RWPE1 (cell line): ENCODE measurements at regions of chr9 and their contacts with region 1.

Region 1: DNA sequence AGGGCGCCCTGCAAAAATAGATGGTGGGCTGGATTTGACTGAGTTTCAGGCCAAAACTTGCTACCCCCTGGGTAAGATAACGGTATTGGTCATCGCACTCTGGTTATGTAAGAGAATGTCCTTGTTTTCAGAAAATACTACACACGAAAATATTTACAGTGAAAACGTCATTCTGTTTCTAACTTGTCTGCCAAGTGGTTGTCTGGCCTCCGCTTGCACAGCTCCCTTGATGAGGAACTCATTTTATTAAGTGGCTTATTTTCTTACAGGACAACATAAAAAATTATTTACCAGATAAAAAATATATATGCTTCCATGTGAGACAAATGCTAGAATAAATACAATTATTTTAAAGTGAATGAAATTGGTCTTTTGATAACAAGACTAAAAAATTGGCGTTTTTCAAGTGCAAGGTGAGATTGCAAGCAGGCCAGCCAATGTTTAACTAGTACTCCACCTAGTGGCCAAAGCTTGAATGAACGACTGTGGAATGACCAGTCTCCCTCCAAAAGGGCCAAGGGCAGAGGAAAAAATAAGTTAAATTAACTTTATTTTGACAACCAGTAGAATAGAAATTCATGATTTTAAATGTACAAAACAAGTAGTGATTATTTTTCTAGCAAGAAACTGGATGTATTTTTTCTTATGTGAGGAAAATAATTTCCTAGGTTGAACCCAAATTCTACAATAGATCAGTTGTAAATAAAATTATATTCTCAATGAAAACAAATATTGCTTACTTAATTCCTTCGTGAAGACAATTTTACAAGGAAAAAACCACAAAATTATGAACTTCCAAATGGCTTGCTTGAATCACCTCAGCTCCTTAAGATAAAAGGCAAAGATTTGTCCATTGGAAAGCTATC is 93.2 kb downstream of the ZFAND5 start:
- DNase-seq: peak; percentile 80
- H3K27ac ChIP-seq: no peak overlapping the region
- CTCF ChIP-seq: peak; percentile 85

Region 2: GRCh38 chr9:71819115-71819739 is 452.6 kb before region 1 on chr9:
- CTCF ChIA-PET with region 1: no interaction called
- POLR2A ChIA-PET with region 1: no interaction called
- DNase-seq: peak; percentile 42
- H3K27ac ChIP-seq: no peak overlapping the region
- CTCF ChIP-seq: peak; percentile 82

Region 3: DNA sequence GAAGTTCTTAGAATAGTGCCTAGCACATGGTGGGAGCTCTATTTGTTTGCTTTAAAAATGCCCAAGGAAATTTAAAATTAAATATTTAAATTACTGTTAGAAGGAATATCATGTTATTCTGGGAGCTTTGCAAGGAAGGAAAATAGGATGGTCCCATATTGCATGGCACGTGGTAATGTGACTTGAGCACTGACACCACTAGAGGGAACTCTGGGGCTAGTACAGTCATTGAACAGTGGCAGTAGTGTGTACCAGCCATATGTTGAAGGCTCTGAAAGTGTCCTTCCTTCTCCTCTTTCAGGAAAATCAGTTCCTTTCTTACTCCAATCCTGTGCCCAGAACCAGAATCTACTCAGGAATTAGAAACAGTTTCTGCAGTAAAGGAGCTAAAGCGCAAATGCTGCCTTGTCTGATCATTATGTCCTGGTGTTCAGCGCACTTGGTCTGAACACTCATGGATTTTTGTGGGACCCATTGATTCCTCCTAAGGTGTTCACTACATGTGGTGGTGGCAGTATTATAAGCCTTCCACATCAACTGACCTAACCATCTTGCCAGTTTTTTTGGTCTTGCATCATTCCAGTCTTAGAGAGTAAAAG is 68.5 kb before region 1 on chr9:
- CTCF ChIA-PET with region 1: interaction called, 11 read pairs
- POLR2A ChIA-PET with region 1: no interaction called
- DNase-seq: peak; percentile 74
- H3K27ac ChIP-seq: no peak overlapping the region
- CTCF ChIP-seq: peak; percentile 62

Region 4: DNA sequence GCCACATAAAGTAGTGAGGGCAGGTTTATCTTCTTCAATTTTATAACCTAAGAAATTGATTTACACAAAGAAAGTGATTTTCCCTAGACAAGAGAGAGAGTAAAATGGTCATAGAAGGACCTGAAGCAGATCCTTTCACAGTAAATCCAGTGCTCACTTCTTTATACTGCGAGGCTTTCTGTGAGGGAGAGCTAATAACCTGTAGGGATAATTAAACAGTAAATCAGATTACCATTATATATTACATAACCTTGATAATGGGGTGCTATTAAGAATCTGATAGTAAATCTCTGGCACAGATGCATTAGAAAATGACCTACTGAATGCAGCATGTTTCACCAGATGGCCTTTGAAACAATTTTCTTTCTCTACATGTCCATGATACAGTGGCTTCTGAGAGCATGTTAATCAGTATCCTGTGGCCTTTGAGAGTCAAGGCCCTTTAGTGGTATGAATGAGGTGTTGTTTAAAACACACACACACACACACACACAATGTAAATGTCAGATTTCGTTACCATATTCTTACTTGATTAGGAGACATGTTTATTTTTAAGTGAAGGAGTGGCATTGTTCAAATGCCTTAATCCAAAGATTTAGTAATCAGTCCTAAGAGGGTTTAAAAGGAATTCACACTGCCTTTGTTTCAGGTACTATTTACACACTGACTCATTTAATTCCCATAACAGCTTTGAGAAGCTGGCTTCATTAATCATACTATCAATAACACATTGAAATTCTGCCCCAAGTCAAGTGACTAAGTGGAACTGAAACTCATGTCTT is 556.3 kb after region 1 on chr9:
- CTCF ChIA-PET with region 1: interaction called, 14 read pairs
- POLR2A ChIA-PET with region 1: no interaction called
- DNase-seq: peak; percentile 89
- H3K27ac ChIP-seq: no peak overlapping the region
- CTCF ChIP-seq: no peak